Activated B cell treated with CpG ODN at 0.5 μM for 24 hours (primary cell): ENCODE measurements at regions of chr2 and their contacts with region 1.

Region 1: GRCh38 chr2:136019306-136019705 is 33.9 kb upstream of the DARS1 start:
- DNase-seq: no peak
- ATAC-seq: peak; percentile 89
- H3K4me3 Mint-ChIP-seq: peak overlapping the region; percentile 4
- H3K27ac Mint-ChIP-seq: peak overlapping the region; percentile 75
- H3K4me1 Mint-ChIP-seq: peaks cover 34% of the 10 kb centered on the region
- H3K27me3 Mint-ChIP-seq: no peaks in the 10 kb centered on the region
- CTCF ChIP-seq: no peak

Region 2: GRCh38 chr2:136008205-136008865 is 11.0 kb before region 1 on chr2:
- CTCF ChIA-PET with region 1: interaction called, 3 read pairs
- POLR2A ChIA-PET with region 1: interaction called, 13 read pairs
- intact Hi-C with region 1: loop called (anchors 1 kb)
- DNase-seq: peak; percentile 46
- ATAC-seq: peak; percentile 93
- H3K4me3 Mint-ChIP-seq: peak overlapping the region; percentile 52
- H3K27ac Mint-ChIP-seq: peak overlapping the region; percentile 90
- H3K4me1 Mint-ChIP-seq: peaks cover 66% of the 10 kb centered on the region
- H3K27me3 Mint-ChIP-seq: no peaks in the 10 kb centered on the region
- CTCF ChIP-seq: no peak

Region 3: DNA sequence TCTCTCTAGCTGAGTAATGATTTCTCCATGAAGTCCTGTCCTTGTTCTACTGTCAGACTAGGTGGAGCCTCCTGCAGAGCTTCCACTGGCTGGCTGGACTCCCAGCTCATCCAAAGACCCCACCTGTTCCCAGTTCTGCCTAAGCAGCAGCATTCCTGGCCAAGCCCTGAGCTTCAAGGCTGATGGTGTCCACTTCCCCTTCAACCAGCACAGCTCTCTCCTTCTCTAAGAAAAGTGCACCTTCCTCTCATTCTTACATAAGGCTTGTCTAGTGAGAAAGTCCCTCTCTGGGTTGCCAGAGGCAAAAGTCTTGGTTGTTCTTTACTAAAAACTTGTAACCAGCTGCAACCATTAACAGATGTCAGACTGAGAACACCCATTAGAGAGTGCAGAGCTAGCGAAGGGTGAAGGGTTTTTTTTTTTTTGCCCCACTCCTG is 39.7 kb after region 1 on chr2:
- CTCF ChIA-PET with region 1: no interaction called
- POLR2A ChIA-PET with region 1: interaction called, 12 read pairs
- intact Hi-C with region 1: loop called (anchors 2 kb)
- DNase-seq: no peak
- ATAC-seq: peak; percentile 63
- H3K4me3 Mint-ChIP-seq: peak overlapping the region; percentile 62
- H3K27ac Mint-ChIP-seq: peak overlapping the region; percentile 77
- H3K4me1 Mint-ChIP-seq: peaks cover 76% of the 10 kb centered on the region
- H3K27me3 Mint-ChIP-seq: no peaks in the 10 kb centered on the region
- CTCF ChIP-seq: no peak

Region 4: GRCh38 chr2:136075466-136075865 is 56.2 kb after region 1 on chr2:
- CTCF ChIA-PET with region 1: no interaction called
- POLR2A ChIA-PET with region 1: no interaction called
- intact Hi-C with region 1: no loop called
- DNase-seq: no peak
- ATAC-seq: no peak
- H3K4me3 Mint-ChIP-seq: no peak overlapping the region
- H3K27ac Mint-ChIP-seq: no peak overlapping the region
- H3K4me1 Mint-ChIP-seq: peaks cover 29% of the 10 kb centered on the region
- H3K27me3 Mint-ChIP-seq: no peaks in the 10 kb centered on the region
- CTCF ChIP-seq: no peak